Activated CD8-positive, alpha-beta T cell treated with anti-CD3 and anti-CD28 coated beads for 36 hours (primary cell): ENCODE measurements at regions of chr12 and their contacts with region 1.

Region 1: DNA sequence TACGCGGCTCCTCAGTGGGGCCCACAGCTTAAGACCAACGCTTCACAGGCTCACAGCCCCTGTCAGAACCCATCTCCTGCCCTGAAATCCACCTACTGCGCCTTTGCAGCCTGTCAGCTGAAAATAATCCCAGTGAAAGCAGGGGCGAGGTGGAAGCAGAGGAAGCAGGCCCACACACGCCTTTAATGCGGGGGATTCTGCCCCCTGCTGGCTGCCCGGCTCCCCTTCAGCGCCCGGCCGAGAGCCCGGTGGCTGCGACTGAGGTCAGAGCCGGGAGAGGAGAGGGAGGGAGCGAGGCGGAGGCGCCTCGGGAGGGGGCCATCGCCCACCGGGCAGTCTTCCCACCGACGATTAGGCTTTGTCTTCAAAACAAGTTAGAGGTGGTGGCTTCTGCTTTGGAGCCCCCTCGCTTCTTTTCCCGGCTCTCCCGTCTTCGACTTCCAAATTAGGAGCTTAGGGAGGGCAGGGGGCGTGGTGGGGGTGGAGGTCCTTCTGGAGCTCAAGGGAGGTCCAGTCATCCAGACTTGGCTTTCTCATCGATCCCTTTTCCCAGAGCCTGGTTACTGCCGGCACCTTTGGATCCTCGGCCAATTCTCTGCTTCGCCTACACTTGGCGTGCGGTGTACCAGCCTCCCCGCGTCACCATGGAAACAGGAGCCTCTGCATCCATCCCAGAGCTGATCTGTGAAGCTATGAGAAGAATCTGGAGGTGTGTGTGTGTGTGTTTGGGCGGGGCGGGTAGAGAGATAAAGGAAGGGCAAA is 25.2 kb upstream of the RND1 start:
- DNase-seq: peak; percentile 86
- ATAC-seq: peak; percentile 97
- H3K4me3 Mint-ChIP-seq: no peak overlapping the region
- H3K27ac Mint-ChIP-seq: no peak overlapping the region
- H3K4me1 Mint-ChIP-seq: no peaks in the 10 kb centered on the region
- H3K27me3 Mint-ChIP-seq: peaks cover 7% of the 10 kb centered on the region
- CTCF ChIP-seq: peak; percentile 98

Region 2: DNA sequence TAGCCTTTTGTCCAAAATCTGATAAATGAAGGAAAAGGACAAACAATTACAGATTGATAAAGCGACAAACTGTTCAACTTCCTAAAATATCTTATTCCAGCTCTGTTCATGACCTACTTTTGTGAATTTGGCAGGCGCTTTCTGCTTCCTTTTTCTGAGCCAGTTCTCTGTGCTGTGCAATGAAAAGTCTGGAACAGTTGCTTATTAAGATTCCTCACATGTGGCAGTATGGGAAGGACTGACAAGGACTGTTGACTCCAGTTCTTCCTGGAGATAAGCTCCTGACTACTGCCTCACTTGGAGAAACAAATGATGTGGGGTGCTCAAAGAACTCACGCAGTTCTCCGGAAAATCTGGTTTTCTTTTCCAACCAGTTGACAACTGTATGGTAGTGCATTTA is 476.8 kb before region 1 on chr12:
- CTCF ChIA-PET with region 1: no interaction called
- POLR2A ChIA-PET with region 1: no interaction called
- intact Hi-C with region 1: no loop called
- DNase-seq: no peak
- ATAC-seq: no peak
- H3K4me3 Mint-ChIP-seq: no peak overlapping the region
- H3K27ac Mint-ChIP-seq: no peak overlapping the region
- H3K4me1 Mint-ChIP-seq: peaks cover 15% of the 10 kb centered on the region
- H3K27me3 Mint-ChIP-seq: peaks cover 6% of the 10 kb centered on the region
- CTCF ChIP-seq: no peak

Region 3: GRCh38 chr12:48832321-48833060 is 58.3 kb before region 1 on chr12:
- CTCF ChIA-PET with region 1: interaction called, 13 read pairs
- POLR2A ChIA-PET with region 1: no interaction called
- intact Hi-C with region 1: no loop called
- DNase-seq: no peak
- ATAC-seq: no peak
- H3K4me3 Mint-ChIP-seq: no peak overlapping the region
- H3K27ac Mint-ChIP-seq: no peak overlapping the region
- H3K4me1 Mint-ChIP-seq: no peaks in the 10 kb centered on the region
- H3K27me3 Mint-ChIP-seq: no peaks in the 10 kb centered on the region
- CTCF ChIP-seq: no peak

Region 4: GRCh38 chr12:48873096-48873495 is 17.7 kb before region 1 on chr12:
- CTCF ChIA-PET with region 1: interaction called, 65 read pairs
- POLR2A ChIA-PET with region 1: no interaction called
- intact Hi-C with region 1: no loop called
- DNase-seq: no peak
- ATAC-seq: no peak
- H3K4me3 Mint-ChIP-seq: no peak overlapping the region
- H3K27ac Mint-ChIP-seq: no peak overlapping the region
- H3K4me1 Mint-ChIP-seq: no peaks in the 10 kb centered on the region
- H3K27me3 Mint-ChIP-seq: no peaks in the 10 kb centered on the region
- CTCF ChIP-seq: no peak

Region 5: DNA sequence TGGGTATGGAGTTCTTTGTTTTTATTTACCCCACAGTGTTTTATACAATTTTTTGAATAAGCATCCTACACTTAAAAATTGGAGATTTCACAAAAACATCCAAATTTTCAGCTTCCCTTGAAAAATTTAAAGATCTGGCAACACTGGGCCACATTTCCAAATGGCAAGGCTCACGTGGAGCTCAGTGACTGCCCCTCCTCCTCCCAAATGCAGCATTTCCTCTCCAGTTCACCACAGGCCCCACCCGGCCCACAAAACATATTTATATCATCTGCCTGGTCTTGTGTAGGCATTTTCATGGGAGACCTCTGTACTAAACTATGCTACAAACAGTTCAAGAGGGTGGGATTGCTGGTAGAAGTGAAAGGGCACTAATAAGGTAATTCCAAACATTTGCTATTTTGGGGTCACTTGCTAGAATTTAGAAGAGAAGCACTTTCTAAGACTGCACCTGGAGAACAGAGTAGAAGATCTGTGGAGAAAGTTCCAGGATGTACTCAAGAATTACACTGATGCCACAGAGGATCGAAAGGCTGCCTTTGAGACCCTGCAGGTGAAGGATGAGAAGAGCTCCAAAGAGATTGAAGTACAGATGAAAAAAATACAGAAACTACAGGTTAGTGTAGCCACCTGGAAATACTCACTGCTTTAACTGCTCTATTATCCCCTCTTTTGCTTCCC is 27.2 kb after region 1 on chr12:
- CTCF ChIA-PET with region 1: interaction called, 18 read pairs
- POLR2A ChIA-PET with region 1: no interaction called
- intact Hi-C with region 1: no loop called
- DNase-seq: peak; percentile 59
- ATAC-seq: peak; percentile 72
- H3K4me3 Mint-ChIP-seq: peak overlapping the region; percentile 51
- H3K27ac Mint-ChIP-seq: peak overlapping the region; percentile 90
- H3K4me1 Mint-ChIP-seq: peaks cover 34% of the 10 kb centered on the region
- H3K27me3 Mint-ChIP-seq: no peaks in the 10 kb centered on the region
- CTCF ChIP-seq: no peak

Region 6: DNA sequence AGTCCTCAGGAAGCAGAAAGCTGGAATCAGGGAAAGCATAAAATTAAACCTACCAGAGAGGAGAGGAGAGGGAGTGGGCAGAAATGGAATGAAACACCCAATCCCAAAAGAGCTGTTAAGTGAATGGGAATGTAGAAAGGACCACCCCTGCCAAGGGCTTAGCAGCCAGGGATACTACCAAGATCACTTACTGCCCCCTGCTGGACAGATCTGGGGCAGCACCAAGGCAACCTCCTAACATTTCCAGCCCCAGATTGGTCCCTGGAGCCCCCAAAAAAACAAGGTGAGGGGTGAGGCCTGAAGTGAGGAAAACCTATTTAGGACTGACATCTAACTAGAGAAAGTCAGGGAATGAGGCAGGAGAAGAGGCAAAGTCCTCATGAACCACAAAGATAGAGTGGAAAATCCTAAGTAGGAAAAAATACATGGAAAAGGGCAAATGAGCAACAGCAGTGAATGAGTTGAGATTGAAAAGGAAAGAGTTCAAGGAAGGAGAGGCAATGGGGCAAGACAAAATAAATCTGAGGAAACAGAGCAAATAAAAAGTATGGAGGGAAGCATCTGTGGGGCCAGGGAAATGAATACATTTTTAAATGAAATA is 45.6 kb after region 1 on chr12:
- CTCF ChIA-PET with region 1: interaction called, 23 read pairs
- POLR2A ChIA-PET with region 1: no interaction called
- intact Hi-C with region 1: no loop called
- DNase-seq: peak; percentile 92
- ATAC-seq: peak; percentile 79
- H3K4me3 Mint-ChIP-seq: no peak overlapping the region
- H3K27ac Mint-ChIP-seq: no peak overlapping the region
- H3K4me1 Mint-ChIP-seq: peaks cover 24% of the 10 kb centered on the region
- H3K27me3 Mint-ChIP-seq: no peaks in the 10 kb centered on the region
- CTCF ChIP-seq: peak; percentile 86

Region 7: GRCh38 chr12:48995061-48995879 is 104.4 kb after region 1 on chr12:
- CTCF ChIA-PET with region 1: interaction called, 14 read pairs
- POLR2A ChIA-PET with region 1: no interaction called
- intact Hi-C with region 1: no loop called
- DNase-seq: peak; percentile 71
- ATAC-seq: no peak
- H3K4me3 Mint-ChIP-seq: no peak overlapping the region
- H3K27ac Mint-ChIP-seq: no peak overlapping the region
- H3K4me1 Mint-ChIP-seq: peaks cover 24% of the 10 kb centered on the region
- H3K27me3 Mint-ChIP-seq: peaks cover 39% of the 10 kb centered on the region
- CTCF ChIP-seq: peak; percentile 84